Transverse colon (tissue), 4 donors: ENCODE measurements at regions of chr3 and their contacts with region 1.

Region 1: GRCh38 chr3:195154793-195155535 is 116.0 kb downstream of the XXYLT1 start:
- DNase-seq: peak; percentile 82
- H3K4me3 ChIP-seq: peak overlapping the region in 1 of 4 donors; percentile 3
- H3K27ac ChIP-seq: peak overlapping the region; percentile 80 to 89 (median 85)
- H3K4me1 ChIP-seq: peaks cover 44 to 72% (median 52%) of the 10 kb centered on the region in 4 donors
- H3K27me3 ChIP-seq: no peaks in the 10 kb centered on the region
- CTCF ChIP-seq: no peak
- EP300 ChIP-seq: no peak
- POLR2A ChIP-seq: no peak

Region 2: DNA sequence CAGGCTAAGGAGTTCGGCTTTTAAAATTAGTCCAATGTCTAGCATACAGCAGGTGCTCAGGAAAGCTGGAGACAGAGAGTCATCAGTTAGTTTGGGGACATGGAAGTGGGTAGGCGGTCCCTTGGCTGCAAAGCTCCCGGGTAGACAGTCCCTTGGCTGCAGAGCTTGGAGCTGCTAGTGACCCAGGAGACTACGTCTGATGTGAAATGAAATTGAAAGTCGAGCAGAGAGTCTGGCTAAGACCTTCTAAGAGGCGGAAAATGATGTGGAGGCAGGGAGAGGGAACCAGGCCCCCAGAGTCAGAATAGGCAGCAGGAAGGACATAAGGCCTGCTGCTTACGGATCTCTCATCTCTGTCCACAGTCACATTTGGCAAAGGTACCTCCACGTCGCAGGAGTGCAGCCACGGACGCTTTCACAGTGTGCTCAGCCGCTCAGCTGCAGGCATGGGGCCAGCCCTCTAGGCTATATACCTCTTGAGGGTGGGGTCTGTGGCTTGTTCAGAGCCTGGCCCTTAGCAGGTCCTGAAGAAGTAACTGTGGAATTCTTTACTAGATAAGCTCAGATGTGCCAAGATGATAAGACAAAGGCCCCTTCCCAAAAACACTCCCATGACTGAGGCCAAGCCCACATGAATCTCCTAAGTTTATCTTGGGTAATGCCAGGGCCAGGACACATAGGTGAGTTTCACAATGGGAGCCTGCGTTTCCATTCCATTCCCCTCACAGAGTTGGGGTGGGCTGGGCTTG is 15.7 kb before region 1 on chr3:
- in situ Hi-C with region 1: no loop called
- intact Hi-C with region 1: loop called (anchors 1 kb)
- DNase-seq: no peak
- H3K4me3 ChIP-seq: no peak overlapping the region
- H3K27ac ChIP-seq: peak overlapping the region in 1 of 4 donors; percentile 13
- H3K4me1 ChIP-seq: peaks cover 0 to 4% (median 0%) of the 10 kb centered on the region in 4 donors
- H3K27me3 ChIP-seq: no peaks in the 10 kb centered on the region
- CTCF ChIP-seq: no peak
- EP300 ChIP-seq: no peak
- POLR2A ChIP-seq: no peak